ENCODE measurements at regions of chr7 and their contacts with region 1.

Region 1: GRCh38 chr7:11212080-11212711 is 238.5 kb downstream of the PHF14 start:
- DNase-seq: peak; percentile 56 to 59
- H3K4me3 ChIP-seq: no peak overlapping the region
- H3K4me3 Mint-ChIP-seq: no peak overlapping the region
- H3K27ac Mint-ChIP-seq: no peak overlapping the region
- H3K4me1 ChIP-seq: 0 out of 2 replicates have a peak, but pooled peaks cover 7% of the 10 kb centered on the region
- H3K4me1 Mint-ChIP-seq: no peaks in the 10 kb centered on the region
- H3K27me3 ChIP-seq: no peaks in the 10 kb centered on the region
- H3K27me3 Mint-ChIP-seq: no peaks in the 10 kb centered on the region
- CTCF ChIP-seq: peak; percentile 71 to 82

Region 2: GRCh38 chr7:10939911-10940703 is 272.1 kb before region 1 on chr7:
- CTCF ChIA-PET with region 1: interaction called, 7 read pairs
- POLR2A ChIA-PET with region 1: interaction called, 3 read pairs
- intact Hi-C with region 1: loop called (anchors 1 kb)
- DNase-seq: peak; percentile 93 to 96
- H3K4me3 ChIP-seq: peak overlapping the region; percentile 51
- H3K4me3 Mint-ChIP-seq: no peak overlapping the region
- H3K27ac Mint-ChIP-seq: no peak overlapping the region
- H3K4me1 ChIP-seq: peaks cover 3% of the 10 kb centered on the region; the same call in 1 of the 2 replicates
- H3K4me1 Mint-ChIP-seq: no peaks in the 10 kb centered on the region
- H3K27me3 ChIP-seq: no peaks in the 10 kb centered on the region
- H3K27me3 Mint-ChIP-seq: no peaks in the 10 kb centered on the region
- CTCF ChIP-seq: no peak

Region 3: GRCh38 chr7:11153694-11154093 is 58.5 kb before region 1 on chr7:
- CTCF ChIA-PET with region 1: no interaction called
- POLR2A ChIA-PET with region 1: no interaction called
- intact Hi-C with region 1: loop called (anchors 1 kb)
- DNase-seq: no peak
- H3K4me3 ChIP-seq: no peak overlapping the region
- H3K4me3 Mint-ChIP-seq: no peak overlapping the region
- H3K27ac Mint-ChIP-seq: no peak overlapping the region
- H3K4me1 ChIP-seq: no peaks in the 10 kb centered on the region
- H3K4me1 Mint-ChIP-seq: no peaks in the 10 kb centered on the region
- H3K27me3 ChIP-seq: no peaks in the 10 kb centered on the region
- H3K27me3 Mint-ChIP-seq: no peaks in the 10 kb centered on the region
- CTCF ChIP-seq: no peak

Region 4: GRCh38 chr7:11224535-11224934 is 12.3 kb after region 1 on chr7:
- CTCF ChIA-PET with region 1: no interaction called
- POLR2A ChIA-PET with region 1: no interaction called
- intact Hi-C with region 1: no loop called
- DNase-seq: no peak
- H3K4me3 ChIP-seq: no peak overlapping the region
- H3K4me3 Mint-ChIP-seq: no peak overlapping the region
- H3K27ac Mint-ChIP-seq: no peak overlapping the region
- H3K4me1 ChIP-seq: no peaks in the 10 kb centered on the region
- H3K4me1 Mint-ChIP-seq: no peaks in the 10 kb centered on the region
- H3K27me3 ChIP-seq: no peaks in the 10 kb centered on the region
- H3K27me3 Mint-ChIP-seq: peaks cover 7% of the 10 kb centered on the region
- CTCF ChIP-seq: no peak

Measured in Caco-2 (cell line).